HepG2 (cell line): ENCODE measurements at regions of chr15 and their contacts with region 1.

Region 1: DNA sequence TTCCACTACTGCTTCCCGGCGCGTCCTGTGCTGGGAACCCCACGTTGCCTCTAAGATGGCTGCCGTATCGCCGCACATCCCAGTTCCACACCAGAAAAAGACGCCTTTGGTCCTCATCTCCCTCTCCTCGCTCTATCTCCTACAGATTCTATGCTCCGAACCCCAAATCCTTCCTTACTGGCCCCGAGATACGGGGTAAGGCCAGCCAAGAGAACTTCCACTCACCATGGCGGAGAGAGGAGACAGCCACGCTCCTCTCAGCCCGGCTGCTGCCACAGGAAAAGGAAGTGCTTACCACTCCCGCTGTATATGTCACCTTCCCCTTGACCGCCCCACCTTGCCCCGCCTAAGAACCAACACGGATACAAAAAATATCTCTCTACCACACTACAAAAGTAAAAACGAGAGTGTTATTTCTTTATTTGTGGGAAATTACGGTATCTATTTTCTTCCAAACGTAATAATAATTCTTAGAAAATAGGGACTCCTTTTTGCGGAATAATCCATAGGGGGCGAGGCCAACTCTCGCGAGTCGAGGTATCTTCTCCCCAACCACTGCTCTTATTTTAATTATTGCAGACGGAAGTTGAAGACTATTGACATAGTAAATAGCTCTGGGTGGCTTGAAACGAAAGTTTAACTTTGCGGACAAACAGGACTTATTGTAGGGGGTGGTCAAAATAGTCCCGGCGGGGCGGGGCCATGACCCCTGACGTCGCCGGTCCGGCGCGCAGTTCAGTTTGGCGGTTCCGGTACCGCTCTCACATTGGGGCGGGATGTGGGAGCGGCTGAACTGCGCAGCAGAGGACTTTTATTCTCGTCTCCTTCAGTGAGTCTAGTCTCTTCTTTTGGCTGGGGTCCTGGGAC is at the starts of genes RPL4 and ZWILCH:
- DNase-seq: peak; percentile 97
- ATAC-seq: peak; percentile 90
- H3K4me3 ChIP-seq: peak within 1 kb of the TSS; percentile 69 to 100 (median 88)
- H3K27ac ChIP-seq: peak within 1 kb of the TSS; percentile 89
- H3K4me1 ChIP-seq: peaks cover 50% of the 10 kb centered on the region
- H3K27me3 ChIP-seq: peaks cover 0 to 5% of the 10 kb centered on the region in 2 experiments; a peak in 1 of 5 replicates
- CTCF ChIP-seq: no peak
- EP300 ChIP-seq: peak in 1 of 2 experiments; percentile 14; a peak in 1 of 4 replicates
- POLR2A ChIP-seq: peak; percentile 94 to 96
- RAD21 ChIP-seq: no peak
- total RNA-seq, gene RPL4: 3,630 and 4,972 TPM in 2 replicates
- total RNA-seq, gene ZWILCH: 27.8 and 44.6 TPM in 2 replicates

Region 2: DNA sequence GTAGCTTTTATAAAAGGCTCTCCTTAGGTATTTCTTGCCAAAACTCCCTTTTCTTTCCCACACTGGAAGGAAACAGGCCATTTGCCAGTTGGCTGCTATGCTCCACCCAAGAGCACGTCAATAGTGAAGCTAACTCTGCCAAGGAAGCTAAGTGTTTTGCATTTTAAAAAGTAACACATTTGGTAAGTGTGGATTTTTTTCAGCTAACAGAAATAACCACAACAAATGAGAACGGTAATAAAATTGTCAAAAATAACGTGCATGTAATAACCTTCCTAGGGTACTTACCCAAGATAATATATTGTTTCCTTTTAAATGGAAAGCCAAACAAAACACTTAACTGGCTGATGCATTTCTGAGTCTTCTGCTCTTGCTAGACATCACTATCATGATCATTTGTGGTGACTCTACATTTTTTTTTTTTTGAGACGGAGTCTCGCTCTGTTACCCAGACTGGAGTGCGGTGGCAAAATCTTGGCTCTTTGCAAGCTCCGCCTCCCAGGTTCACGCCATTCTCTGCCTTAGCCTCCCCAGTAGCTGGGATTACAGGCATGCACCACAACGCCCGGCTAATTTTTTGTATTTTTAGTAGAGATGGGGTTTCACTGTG is 991.9 kb before region 1 on chr15:
- CTCF ChIA-PET with region 1: no interaction called
- POLR2A ChIA-PET with region 1: no interaction called
- in situ Hi-C with region 1: no loop called
- intact Hi-C with region 1: no loop called
- DNase-seq: no peak
- ATAC-seq: no peak
- H3K4me3 ChIP-seq: no peak overlapping the region
- H3K27ac ChIP-seq: no peak overlapping the region
- H3K4me1 ChIP-seq: peaks cover 24% of the 10 kb centered on the region
- H3K27me3 ChIP-seq: no peaks in the 10 kb centered on the region; a peak in 1 of 5 replicates
- CTCF ChIP-seq: no peak
- EP300 ChIP-seq: no peak
- POLR2A ChIP-seq: no peak
- RAD21 ChIP-seq: no peak

Region 3: DNA sequence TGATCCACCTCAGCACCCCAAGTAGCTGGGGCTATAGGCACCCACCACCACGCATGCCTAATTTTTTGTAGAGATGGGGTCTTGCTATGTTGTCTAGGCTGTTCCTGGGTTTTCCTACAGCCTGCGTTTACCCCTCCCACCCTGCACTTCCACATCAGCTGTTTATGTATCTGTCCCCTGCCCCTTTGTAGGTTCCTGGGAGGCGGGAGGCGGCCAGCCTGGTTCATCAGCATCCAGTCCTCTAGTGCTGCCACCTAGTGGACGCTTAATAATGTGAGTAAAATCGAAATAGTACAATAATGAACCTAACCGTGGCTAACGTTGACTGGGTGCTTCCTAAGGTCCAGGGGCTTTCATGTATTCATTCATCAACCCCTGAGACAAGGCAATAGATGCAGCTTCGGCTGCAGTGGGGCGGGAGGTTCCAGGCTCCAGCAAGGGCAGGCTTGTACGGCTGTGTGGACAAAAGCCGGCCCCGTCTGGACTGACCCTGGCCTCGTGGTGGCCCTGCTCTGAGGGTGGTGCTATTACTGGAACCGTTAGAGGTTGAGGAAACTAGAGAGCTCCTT is 62.3 kb after region 1 on chr15:
- CTCF ChIA-PET with region 1: no interaction called
- POLR2A ChIA-PET with region 1: interaction called, 6 read pairs
- in situ Hi-C with region 1: no loop called
- intact Hi-C with region 1: loop called (anchors 5 kb)
- DNase-seq: peak; percentile 76
- ATAC-seq: peak; percentile 76
- H3K4me3 ChIP-seq: peak overlapping the region; percentile 42 to 71 (median 55); a peak in 5 of 6 replicates
- H3K27ac ChIP-seq: no peak overlapping the region
- H3K4me1 ChIP-seq: peaks cover 31% of the 10 kb centered on the region
- H3K27me3 ChIP-seq: no peaks in the 10 kb centered on the region
- CTCF ChIP-seq: peak; percentile 90
- EP300 ChIP-seq: no peak
- POLR2A ChIP-seq: no peak
- RAD21 ChIP-seq: no peak